H1 (cell line): ENCODE measurements at regions of chr11 and their contacts with region 1.

Region 1: DNA sequence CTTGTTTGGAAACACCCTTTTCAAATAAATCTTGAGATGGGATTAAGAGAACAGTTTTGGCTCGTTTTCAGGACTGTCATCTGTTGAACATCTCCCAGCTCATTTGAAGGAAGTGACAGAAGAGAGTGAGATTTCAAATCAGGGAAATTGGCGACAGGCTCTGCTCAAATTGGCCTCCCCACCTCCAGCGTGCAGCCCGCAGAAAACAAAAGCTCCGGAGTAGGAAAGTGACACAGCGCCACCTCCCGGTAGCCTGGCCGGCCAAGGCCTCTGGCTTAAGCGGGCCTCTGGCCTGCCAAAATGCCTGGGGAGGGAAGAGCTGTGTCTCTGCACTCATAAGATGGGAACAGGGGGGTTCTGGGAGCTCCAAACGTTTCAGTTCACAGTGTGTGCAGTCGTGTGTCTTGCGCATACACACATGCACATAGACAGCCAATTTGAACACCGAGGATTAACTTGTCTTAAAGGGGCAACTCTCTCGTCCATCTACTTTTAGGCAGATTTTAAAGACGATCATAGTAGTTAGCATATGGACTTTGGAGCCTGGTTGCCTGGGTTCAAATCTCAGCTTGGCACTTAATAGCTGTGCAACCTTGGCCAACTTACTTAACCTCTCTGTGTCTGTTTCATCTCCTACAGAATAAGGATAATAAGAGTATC is 132.7 kb upstream of the RCN1 start:
- DNase-seq: peak; percentile 47 to 97
- H3K4me3 ChIP-seq: no peak overlapping the region
- H3K27ac ChIP-seq: no peak overlapping the region
- H3K4me1 ChIP-seq: peaks cover 0 to 5% (median 0%) of the 10 kb centered on the region in 4 experiments; a peak in 1 of 7 replicates
- H3K27me3 ChIP-seq: no peaks in the 10 kb centered on the region; a peak in 1 of 7 replicates
- CTCF ChIP-seq: peak; percentile 90 to 95 (median 94)
- EP300 ChIP-seq: no peak
- POLR2A ChIP-seq: no peak
- RAD21 ChIP-seq: peak; percentile 93 to 94

Region 2: GRCh38 chr11:31798554-31799434 is 159.4 kb before region 1 on chr11:
- CTCF ChIA-PET with region 1: interaction called, 32 read pairs
- POLR2A ChIA-PET with region 1: no interaction called
- DNase-seq: peak in 1 of 2 experiments; percentile 89
- H3K4me3 ChIP-seq: peak overlapping the region; percentile 45 to 62 (median 51)
- H3K27ac ChIP-seq: no peak overlapping the region
- H3K4me1 ChIP-seq: peaks cover 18 to 30% (median 19%) of the 10 kb centered on the region in 4 experiments
- H3K27me3 ChIP-seq: peaks cover 71 to 86% (median 82%) of the 10 kb centered on the region in 4 experiments
- CTCF ChIP-seq: peak; percentile 65 to 75 (median 66)
- EP300 ChIP-seq: peak in 1 of 2 experiments; percentile 50; a peak in 1 of 3 replicates
- POLR2A ChIP-seq: no peak
- RAD21 ChIP-seq: peak; percentile 61 to 73

Region 3: DNA sequence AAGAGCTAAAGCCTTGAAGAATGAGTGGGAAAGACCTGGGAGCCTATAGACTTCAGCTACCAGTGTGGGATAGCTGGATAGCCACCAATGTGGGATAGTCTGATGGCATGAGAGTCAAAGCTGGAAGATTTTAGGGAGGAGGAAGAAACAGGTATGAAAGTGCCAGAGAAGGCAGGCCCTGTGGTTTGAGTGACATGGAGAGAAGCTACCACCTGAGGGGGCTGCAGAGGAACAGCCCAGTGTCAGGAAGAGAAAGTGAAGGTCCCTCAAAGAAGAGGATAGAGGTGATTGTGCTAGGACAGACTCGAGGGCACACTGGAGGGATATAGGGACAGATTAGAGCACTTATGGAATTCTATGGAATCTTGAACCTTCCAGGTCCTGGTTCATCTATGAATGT is 124.0 kb before region 1 on chr11:
- CTCF ChIA-PET with region 1: interaction called, 18 read pairs
- POLR2A ChIA-PET with region 1: no interaction called
- DNase-seq: no peak
- H3K4me3 ChIP-seq: no peak overlapping the region
- H3K27ac ChIP-seq: no peak overlapping the region
- H3K4me1 ChIP-seq: peaks cover 0 to 2% (median 0%) of the 10 kb centered on the region in 4 experiments; a peak in 2 of 7 replicates
- H3K27me3 ChIP-seq: peaks cover 0 to 2% (median under 1%) of the 10 kb centered on the region in 4 experiments; a peak in 2 of 7 replicates
- CTCF ChIP-seq: peak; percentile 47 to 62 (median 59)
- EP300 ChIP-seq: no peak
- POLR2A ChIP-seq: no peak
- RAD21 ChIP-seq: peak; percentile 56 to 64

Region 4: DNA sequence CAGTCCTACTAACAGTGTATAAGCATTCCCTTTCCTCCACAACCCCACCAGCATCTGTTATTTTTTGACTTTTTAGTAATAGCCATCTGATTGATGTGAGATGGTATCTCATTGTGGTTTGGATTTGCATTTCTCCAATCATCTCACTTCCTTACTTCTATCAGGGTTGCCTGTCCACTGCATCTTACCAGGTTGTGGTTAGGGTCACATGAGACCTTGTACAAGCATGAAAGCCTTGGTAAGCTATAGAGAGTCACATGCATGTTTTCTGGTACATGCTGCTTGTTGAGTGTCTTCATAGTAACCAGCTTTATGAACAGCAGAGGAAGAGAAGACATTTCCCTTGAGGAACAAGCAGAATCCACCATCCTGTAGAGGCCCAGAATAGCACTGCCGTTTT is 44.2 kb before region 1 on chr11:
- CTCF ChIA-PET with region 1: interaction called, 12 read pairs
- POLR2A ChIA-PET with region 1: no interaction called
- DNase-seq: no peak
- H3K4me3 ChIP-seq: no peak overlapping the region
- H3K27ac ChIP-seq: no peak overlapping the region
- H3K4me1 ChIP-seq: no peaks in the 10 kb centered on the region
- H3K27me3 ChIP-seq: no peaks in the 10 kb centered on the region
- CTCF ChIP-seq: no peak
- EP300 ChIP-seq: no peak
- POLR2A ChIP-seq: no peak
- RAD21 ChIP-seq: no peak

Region 5: GRCh38 chr11:31968461-31969358 is 10.5 kb after region 1 on chr11:
- CTCF ChIA-PET with region 1: interaction called, 33 read pairs
- POLR2A ChIA-PET with region 1: interaction called, 3 read pairs
- DNase-seq: no peak
- H3K4me3 ChIP-seq: no peak overlapping the region
- H3K27ac ChIP-seq: no peak overlapping the region
- H3K4me1 ChIP-seq: no peaks in the 10 kb centered on the region
- H3K27me3 ChIP-seq: no peaks in the 10 kb centered on the region
- CTCF ChIP-seq: no peak
- EP300 ChIP-seq: no peak
- POLR2A ChIP-seq: no peak
- RAD21 ChIP-seq: no peak

Region 6: GRCh38 chr11:32006799-32007388 is 48.7 kb after region 1 on chr11:
- CTCF ChIA-PET with region 1: interaction called, 19 read pairs
- POLR2A ChIA-PET with region 1: no interaction called
- DNase-seq: no peak
- H3K4me3 ChIP-seq: no peak overlapping the region
- H3K27ac ChIP-seq: no peak overlapping the region
- H3K4me1 ChIP-seq: peaks cover 0 to 4% (median 0%) of the 10 kb centered on the region in 4 experiments; a peak in 2 of 7 replicates
- H3K27me3 ChIP-seq: no peaks in the 10 kb centered on the region
- CTCF ChIP-seq: peak; percentile 57 to 83 (median 64)
- EP300 ChIP-seq: no peak
- POLR2A ChIP-seq: no peak
- RAD21 ChIP-seq: peak; percentile 76 to 84

Region 7: DNA sequence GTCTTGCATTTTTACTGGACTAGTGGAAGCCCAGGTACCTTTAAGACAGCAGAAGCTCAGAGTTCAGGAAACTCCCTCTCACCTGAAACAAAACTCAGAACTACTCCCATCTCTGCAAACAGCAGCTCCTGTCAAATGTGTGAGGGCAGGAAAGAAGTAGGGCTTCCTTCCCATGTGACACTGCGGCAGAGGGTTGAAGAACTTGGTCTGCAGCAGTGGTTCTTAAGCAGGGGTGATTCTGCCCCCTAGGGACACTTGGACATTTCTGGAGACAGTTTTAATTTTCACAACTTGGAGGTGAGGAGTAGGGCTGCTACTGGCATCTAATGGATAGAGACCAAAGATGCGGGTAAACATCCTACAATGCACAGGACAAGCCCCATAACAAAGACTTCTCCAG is 196.1 kb after region 1 on chr11:
- CTCF ChIA-PET with region 1: no interaction called
- POLR2A ChIA-PET with region 1: no interaction called
- DNase-seq: no peak
- H3K4me3 ChIP-seq: no peak overlapping the region
- H3K27ac ChIP-seq: no peak overlapping the region
- H3K4me1 ChIP-seq: no peaks in the 10 kb centered on the region
- H3K27me3 ChIP-seq: no peaks in the 10 kb centered on the region
- CTCF ChIP-seq: peak in 1 of 3 experiments; percentile 35; a peak in 1 of 4 replicates
- EP300 ChIP-seq: no peak
- POLR2A ChIP-seq: no peak
- RAD21 ChIP-seq: peak; percentile 41 to 59